Activated CD8-positive, alpha-beta T cell treated with anti-CD3 and anti-CD28 coated beads for 36 hours (primary cell): ENCODE measurements at regions of chr17 and their contacts with region 1.

Region 1: GRCh38 chr17:50783193-50783660 is 15.9 kb upstream of the ANKRD40CL start:
- DNase-seq: peak; percentile 87
- ATAC-seq: peak; percentile 96
- H3K4me3 Mint-ChIP-seq: no peak overlapping the region
- H3K27ac Mint-ChIP-seq: no peak overlapping the region
- H3K4me1 Mint-ChIP-seq: peaks cover 23% of the 10 kb centered on the region
- H3K27me3 Mint-ChIP-seq: peaks cover 2% of the 10 kb centered on the region
- CTCF ChIP-seq: peak; percentile 95

Region 2: GRCh38 chr17:50661795-50662391 is 121.3 kb before region 1 on chr17:
- CTCF ChIA-PET with region 1: no interaction called
- POLR2A ChIA-PET with region 1: no interaction called
- intact Hi-C with region 1: no loop called
- DNase-seq: peak; percentile 37
- ATAC-seq: peak; percentile 93
- H3K4me3 Mint-ChIP-seq: no peak overlapping the region
- H3K27ac Mint-ChIP-seq: peak overlapping the region; percentile 84
- H3K4me1 Mint-ChIP-seq: peaks cover 12% of the 10 kb centered on the region
- H3K27me3 Mint-ChIP-seq: peaks cover 1% of the 10 kb centered on the region
- CTCF ChIP-seq: no peak

Region 3: GRCh38 chr17:50737118-50737698 is 46.0 kb before region 1 on chr17:
- CTCF ChIA-PET with region 1: interaction called, 12 read pairs
- POLR2A ChIA-PET with region 1: no interaction called
- intact Hi-C with region 1: no loop called
- DNase-seq: peak; percentile 39
- ATAC-seq: peak; percentile 77
- H3K4me3 Mint-ChIP-seq: no peak overlapping the region
- H3K27ac Mint-ChIP-seq: peak overlapping the region; percentile 40
- H3K4me1 Mint-ChIP-seq: peaks cover 53% of the 10 kb centered on the region
- H3K27me3 Mint-ChIP-seq: no peaks in the 10 kb centered on the region
- CTCF ChIP-seq: no peak

Region 4: GRCh38 chr17:50802609-50803515 is 19.6 kb after region 1 on chr17:
- CTCF ChIA-PET with region 1: interaction called, 18 read pairs
- POLR2A ChIA-PET with region 1: interaction called, 4 read pairs
- intact Hi-C with region 1: no loop called
- DNase-seq: no peak
- ATAC-seq: no peak
- H3K4me3 Mint-ChIP-seq: no peak overlapping the region
- H3K27ac Mint-ChIP-seq: no peak overlapping the region
- H3K4me1 Mint-ChIP-seq: no peaks in the 10 kb centered on the region
- H3K27me3 Mint-ChIP-seq: no peaks in the 10 kb centered on the region
- CTCF ChIP-seq: no peak

Region 5: DNA sequence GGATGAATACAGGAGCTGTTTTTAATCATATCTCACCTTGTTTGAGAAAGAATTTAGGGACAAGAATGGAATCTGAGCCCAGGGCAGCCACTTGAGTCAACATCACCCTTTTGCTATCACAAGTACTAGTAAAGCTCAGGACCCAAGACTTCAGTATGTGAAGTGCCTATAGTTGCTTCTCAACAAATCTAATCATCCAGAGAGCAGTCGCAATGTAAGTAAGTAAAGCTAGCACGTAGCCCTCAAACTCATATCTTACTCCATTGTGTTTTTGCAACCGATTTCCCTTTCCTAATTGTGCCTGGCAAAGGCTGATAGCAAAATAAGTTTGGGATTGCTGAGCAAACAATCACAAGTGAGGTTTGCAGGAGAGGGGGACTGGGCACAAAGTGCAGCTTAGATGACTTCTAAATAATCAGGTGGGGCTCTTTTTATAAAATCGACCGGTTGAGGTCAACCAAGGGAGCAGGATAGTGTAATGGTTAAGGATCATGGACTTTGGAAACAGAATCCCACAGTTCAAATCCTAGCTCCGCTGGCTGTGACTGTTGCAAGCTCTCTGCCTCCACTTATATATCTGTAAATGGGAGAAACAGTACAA is 69.9 kb after region 1 on chr17:
- CTCF ChIA-PET with region 1: interaction called, 25 read pairs
- POLR2A ChIA-PET with region 1: no interaction called
- intact Hi-C with region 1: no loop called
- DNase-seq: no peak
- ATAC-seq: no peak
- H3K4me3 Mint-ChIP-seq: no peak overlapping the region
- H3K27ac Mint-ChIP-seq: no peak overlapping the region
- H3K4me1 Mint-ChIP-seq: peaks cover 13% of the 10 kb centered on the region
- H3K27me3 Mint-ChIP-seq: no peaks in the 10 kb centered on the region
- CTCF ChIP-seq: no peak

Region 6: GRCh38 chr17:50949989-50950881 is 167.0 kb after region 1 on chr17:
- CTCF ChIA-PET with region 1: interaction called, 23 read pairs
- POLR2A ChIA-PET with region 1: no interaction called
- intact Hi-C with region 1: loop called (anchors 10 kb)
- DNase-seq: peak; percentile 69
- ATAC-seq: peak; percentile 91
- H3K4me3 Mint-ChIP-seq: no peak overlapping the region
- H3K27ac Mint-ChIP-seq: no peak overlapping the region
- H3K4me1 Mint-ChIP-seq: peaks cover 12% of the 10 kb centered on the region
- H3K27me3 Mint-ChIP-seq: no peaks in the 10 kb centered on the region
- CTCF ChIP-seq: peak; percentile 69

Region 7: GRCh38 chr17:50963139-50963538 is 179.9 kb after region 1 on chr17:
- CTCF ChIA-PET with region 1: interaction called, 12 read pairs
- POLR2A ChIA-PET with region 1: no interaction called
- intact Hi-C with region 1: loop called (anchors 10 kb)
- DNase-seq: no peak
- ATAC-seq: no peak
- H3K4me3 Mint-ChIP-seq: no peak overlapping the region
- H3K27ac Mint-ChIP-seq: no peak overlapping the region
- H3K4me1 Mint-ChIP-seq: peaks cover 6% of the 10 kb centered on the region
- H3K27me3 Mint-ChIP-seq: no peaks in the 10 kb centered on the region
- CTCF ChIP-seq: no peak